ENCODE measurements at regions of chr2 and their contacts with region 1.

Region 1: GRCh38 chr2:28594289-28595108 is 98.6 kb downstream of the PLB1 start:
- DNase-seq: peak; percentile 93
- ATAC-seq: peak; percentile 88
- H3K4me3 Mint-ChIP-seq: peak overlapping the region; percentile 39
- H3K27ac Mint-ChIP-seq: peak overlapping the region; percentile 76
- H3K4me1 Mint-ChIP-seq: peaks cover 13% of the 10 kb centered on the region
- H3K27me3 Mint-ChIP-seq: no peaks in the 10 kb centered on the region
- CTCF ChIP-seq: peak; percentile 90

Region 2: DNA sequence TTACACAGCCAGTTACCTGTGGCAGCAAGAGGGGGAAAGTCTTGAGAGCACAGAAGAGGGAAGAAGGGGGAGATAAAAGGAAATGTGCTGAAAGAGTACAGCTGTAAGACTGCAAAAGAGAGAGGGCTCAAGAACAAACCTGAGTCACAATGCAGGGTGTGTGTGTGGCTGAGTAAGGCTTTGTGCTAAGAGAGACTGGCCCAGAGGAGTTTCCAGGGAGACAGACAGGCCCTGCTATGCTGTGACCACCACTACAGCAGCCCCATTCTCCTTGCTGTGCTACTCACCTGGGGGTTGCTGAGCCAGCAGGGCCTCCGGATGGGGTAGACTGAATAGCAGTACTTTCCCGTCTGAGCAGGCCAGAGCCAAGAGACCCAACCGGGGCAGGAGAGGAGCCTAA is 1259.2 kb before region 1 on chr2:
- CTCF ChIA-PET with region 1: no interaction called
- POLR2A ChIA-PET with region 1: no interaction called
- intact Hi-C with region 1: no loop called
- DNase-seq: no peak
- ATAC-seq: no peak
- H3K4me3 Mint-ChIP-seq: no peak overlapping the region
- H3K27ac Mint-ChIP-seq: no peak overlapping the region
- H3K4me1 Mint-ChIP-seq: no peaks in the 10 kb centered on the region
- H3K27me3 Mint-ChIP-seq: no peaks in the 10 kb centered on the region
- CTCF ChIP-seq: no peak

Region 3: GRCh38 chr2:28528206-28528605 is 66.3 kb before region 1 on chr2:
- CTCF ChIA-PET with region 1: no interaction called
- POLR2A ChIA-PET with region 1: no interaction called
- intact Hi-C with region 1: no loop called
- DNase-seq: no peak
- ATAC-seq: no peak
- H3K4me3 Mint-ChIP-seq: no peak overlapping the region
- H3K27ac Mint-ChIP-seq: no peak overlapping the region
- H3K4me1 Mint-ChIP-seq: no peaks in the 10 kb centered on the region
- H3K27me3 Mint-ChIP-seq: peaks cover 21% of the 10 kb centered on the region
- CTCF ChIP-seq: no peak

Region 4: GRCh38 chr2:28566521-28567041 is 27.9 kb before region 1 on chr2:
- CTCF ChIA-PET with region 1: interaction called, 43 read pairs
- POLR2A ChIA-PET with region 1: no interaction called
- intact Hi-C with region 1: no loop called
- DNase-seq: peak; percentile 91
- ATAC-seq: peak; percentile 99
- H3K4me3 Mint-ChIP-seq: peak overlapping the region; percentile 81
- H3K27ac Mint-ChIP-seq: peak overlapping the region; percentile 76
- H3K4me1 Mint-ChIP-seq: peaks cover 11% of the 10 kb centered on the region
- H3K27me3 Mint-ChIP-seq: peaks cover 2% of the 10 kb centered on the region
- CTCF ChIP-seq: peak; percentile 100

Region 5: DNA sequence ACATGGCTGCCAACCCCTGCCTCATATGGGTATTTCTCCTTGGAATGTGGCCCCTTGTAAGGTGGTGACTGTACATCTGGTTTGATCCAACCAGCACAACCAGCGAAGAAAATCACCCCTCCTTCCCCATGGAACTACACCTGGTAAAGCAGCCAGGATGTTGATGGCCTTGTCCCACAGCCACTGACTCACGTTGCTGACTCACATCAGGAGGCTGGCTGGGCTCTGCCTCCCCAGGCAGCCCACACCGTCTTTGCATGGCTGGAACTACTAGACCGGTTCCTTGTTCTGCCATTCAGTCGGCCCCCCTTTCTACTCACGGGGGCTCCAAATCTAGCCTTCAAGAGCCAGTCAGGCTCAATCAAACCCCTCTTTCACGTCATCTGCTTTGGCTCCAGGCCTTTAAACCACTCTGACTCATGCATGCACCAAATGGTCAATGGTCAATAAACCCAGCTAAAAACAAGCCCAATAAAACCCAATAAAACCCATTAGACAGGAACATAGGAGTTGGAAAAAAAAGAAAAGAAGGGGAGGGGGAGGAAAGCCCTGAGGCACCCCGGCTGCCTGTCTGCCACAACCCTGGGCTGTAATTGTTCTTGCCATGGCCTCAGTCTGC is 16.2 kb after region 1 on chr2:
- CTCF ChIA-PET with region 1: interaction called, 122 read pairs
- POLR2A ChIA-PET with region 1: interaction called, 9 read pairs
- intact Hi-C with region 1: no loop called
- DNase-seq: peak; percentile 77
- ATAC-seq: peak; percentile 62
- H3K4me3 Mint-ChIP-seq: no peak overlapping the region
- H3K27ac Mint-ChIP-seq: no peak overlapping the region
- H3K4me1 Mint-ChIP-seq: peaks cover 24% of the 10 kb centered on the region
- H3K27me3 Mint-ChIP-seq: no peaks in the 10 kb centered on the region
- CTCF ChIP-seq: no peak

Region 6: DNA sequence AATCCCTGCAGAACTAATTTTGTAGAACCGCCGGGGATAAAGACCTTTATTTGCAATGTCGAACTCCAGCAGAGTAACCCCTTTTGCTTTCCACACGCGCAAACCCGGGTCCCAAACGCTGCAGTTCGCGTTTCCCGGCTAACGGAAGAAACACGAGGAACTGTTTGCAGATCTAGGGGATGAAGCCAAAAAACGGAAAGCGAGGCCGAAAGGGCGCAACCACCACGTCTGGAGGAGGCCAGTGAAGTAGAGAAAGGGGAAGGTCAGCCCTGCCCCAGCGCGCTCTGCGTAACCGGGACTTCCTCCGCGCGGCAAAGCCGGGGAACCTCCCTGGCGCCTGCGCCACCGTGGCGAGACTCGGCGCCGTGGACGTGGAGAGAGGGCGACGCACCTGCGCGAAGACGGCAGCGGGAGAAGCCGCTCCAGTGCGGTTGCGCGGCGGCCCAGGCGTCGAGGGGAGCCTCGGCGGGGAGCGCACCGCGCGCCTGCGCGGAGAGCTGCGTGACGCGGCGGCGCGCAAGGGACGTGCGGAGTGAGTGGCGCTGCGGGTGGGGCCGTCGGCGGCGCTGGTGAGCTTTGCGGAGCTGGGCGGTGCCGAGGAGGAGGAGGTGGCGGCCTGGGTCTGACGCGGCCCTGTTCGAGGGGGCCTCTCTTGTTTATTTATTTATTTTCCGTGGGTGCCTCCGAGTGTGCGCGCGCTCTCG is 156.9 kb after region 1 on chr2 and contains the start of gene PPP1CB:
- CTCF ChIA-PET with region 1: interaction called, 156 read pairs
- POLR2A ChIA-PET with region 1: interaction called, 8 read pairs
- intact Hi-C with region 1: loop called (anchors 2 kb)
- DNase-seq: peak; percentile 93
- ATAC-seq: peak; percentile 89
- H3K4me3 Mint-ChIP-seq: peak within 1 kb of the TSS; percentile 94
- H3K27ac Mint-ChIP-seq: peak within 1 kb of the TSS; percentile 96
- H3K4me1 Mint-ChIP-seq: peaks cover 54% of the 10 kb centered on the region
- H3K27me3 Mint-ChIP-seq: no peaks in the 10 kb centered on the region
- CTCF ChIP-seq: no peak
- total RNA-seq, gene PPP1CB: 206 to 216 TPM

Region 7: GRCh38 chr2:28767337-28768084 is 173.0 kb after region 1 on chr2:
- CTCF ChIA-PET with region 1: interaction called, 23 read pairs
- POLR2A ChIA-PET with region 1: no interaction called
- intact Hi-C with region 1: no loop called
- DNase-seq: no peak
- ATAC-seq: no peak
- H3K4me3 Mint-ChIP-seq: no peak overlapping the region
- H3K27ac Mint-ChIP-seq: no peak overlapping the region
- H3K4me1 Mint-ChIP-seq: peaks cover 84% of the 10 kb centered on the region
- H3K27me3 Mint-ChIP-seq: no peaks in the 10 kb centered on the region
- CTCF ChIP-seq: no peak

Region 8: GRCh38 chr2:28801726-28802487 is 207.4 kb after region 1 on chr2:
- CTCF ChIA-PET with region 1: interaction called, 10 read pairs
- POLR2A ChIA-PET with region 1: interaction called, 3 read pairs
- intact Hi-C with region 1: no loop called
- DNase-seq: no peak
- ATAC-seq: no peak
- H3K4me3 Mint-ChIP-seq: no peak overlapping the region
- H3K27ac Mint-ChIP-seq: no peak overlapping the region
- H3K4me1 Mint-ChIP-seq: peaks cover 12% of the 10 kb centered on the region
- H3K27me3 Mint-ChIP-seq: no peaks in the 10 kb centered on the region
- CTCF ChIP-seq: no peak

Region 9: GRCh38 chr2:28821295-28821958 is 226.9 kb after region 1 on chr2:
- CTCF ChIA-PET with region 1: interaction called, 10 read pairs
- POLR2A ChIA-PET with region 1: no interaction called
- intact Hi-C with region 1: no loop called
- DNase-seq: peak; percentile 77
- ATAC-seq: peak; percentile 95
- H3K4me3 Mint-ChIP-seq: no peak overlapping the region
- H3K27ac Mint-ChIP-seq: no peak overlapping the region
- H3K4me1 Mint-ChIP-seq: peaks cover 7% of the 10 kb centered on the region
- H3K27me3 Mint-ChIP-seq: no peaks in the 10 kb centered on the region
- CTCF ChIP-seq: peak; percentile 79

Region 10: DNA sequence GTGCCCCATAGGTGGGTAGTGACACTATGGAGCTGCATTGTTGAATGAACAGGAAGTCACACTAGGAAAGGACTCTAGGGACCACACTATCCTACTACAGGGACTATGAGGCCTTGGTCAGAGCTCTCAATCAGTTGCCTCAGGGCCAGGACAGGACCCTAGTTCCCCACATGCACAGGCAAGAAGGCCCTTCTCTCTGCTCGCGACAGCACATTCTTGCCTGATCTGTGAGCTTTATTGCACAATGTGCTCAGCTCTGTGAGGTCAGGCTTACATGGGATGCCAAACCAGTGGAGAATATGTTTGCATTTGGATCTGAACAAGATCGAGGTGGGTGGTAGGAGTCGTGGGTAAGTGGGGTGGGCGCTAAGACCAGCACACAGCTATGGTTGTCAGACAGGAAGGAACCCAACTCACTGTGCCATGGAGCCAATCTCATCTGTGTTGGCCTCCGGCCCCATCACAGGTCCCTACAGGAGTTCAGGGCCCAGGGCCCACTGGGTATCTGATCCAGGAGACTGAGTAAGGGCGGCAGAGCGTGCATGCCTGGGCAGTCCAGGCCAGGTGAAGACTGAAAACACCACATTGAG is 471.9 kb after region 1 on chr2:
- CTCF ChIA-PET with region 1: no interaction called
- POLR2A ChIA-PET with region 1: no interaction called
- intact Hi-C with region 1: no loop called
- DNase-seq: no peak
- ATAC-seq: no peak
- H3K4me3 Mint-ChIP-seq: no peak overlapping the region
- H3K27ac Mint-ChIP-seq: no peak overlapping the region
- H3K4me1 Mint-ChIP-seq: no peaks in the 10 kb centered on the region
- H3K27me3 Mint-ChIP-seq: no peaks in the 10 kb centered on the region
- CTCF ChIP-seq: no peak